ENCODE measurements at regions of chr1 and their contacts with region 1.

Region 1: DNA sequence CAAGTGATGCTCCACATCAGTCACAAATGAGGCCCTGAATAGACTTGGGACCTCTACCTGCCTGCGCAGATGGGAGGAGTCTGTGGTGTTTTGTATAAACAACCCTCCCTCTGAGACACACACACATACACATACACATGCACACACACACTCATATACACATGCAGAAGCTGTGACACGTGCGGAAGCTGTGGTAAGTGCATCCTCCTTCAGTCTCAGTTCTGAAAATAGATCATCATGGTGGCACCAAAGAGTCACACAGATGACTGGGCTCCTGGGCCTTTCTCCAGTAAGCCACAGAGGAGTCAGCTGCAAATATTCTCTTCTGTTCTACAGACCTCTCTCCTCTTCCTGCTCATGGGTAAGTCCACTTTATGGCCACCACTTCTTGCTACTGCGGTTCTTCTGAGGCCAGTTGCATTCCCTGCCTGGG is at the start of gene LY9:
- DNase-seq: peak; percentile 94
- H3K4me3 ChIP-seq: peak within 1 kb of the TSS; percentile 76
- H3K27ac ChIP-seq: peak within 1 kb of the TSS; percentile 82
- H3K4me1 ChIP-seq: peaks cover 51% of the 10 kb centered on the region
- CTCF ChIP-seq: no peak
- total RNA-seq, gene LY9: 23.7 and 28.4 TPM in 2 replicates

Region 2: DNA sequence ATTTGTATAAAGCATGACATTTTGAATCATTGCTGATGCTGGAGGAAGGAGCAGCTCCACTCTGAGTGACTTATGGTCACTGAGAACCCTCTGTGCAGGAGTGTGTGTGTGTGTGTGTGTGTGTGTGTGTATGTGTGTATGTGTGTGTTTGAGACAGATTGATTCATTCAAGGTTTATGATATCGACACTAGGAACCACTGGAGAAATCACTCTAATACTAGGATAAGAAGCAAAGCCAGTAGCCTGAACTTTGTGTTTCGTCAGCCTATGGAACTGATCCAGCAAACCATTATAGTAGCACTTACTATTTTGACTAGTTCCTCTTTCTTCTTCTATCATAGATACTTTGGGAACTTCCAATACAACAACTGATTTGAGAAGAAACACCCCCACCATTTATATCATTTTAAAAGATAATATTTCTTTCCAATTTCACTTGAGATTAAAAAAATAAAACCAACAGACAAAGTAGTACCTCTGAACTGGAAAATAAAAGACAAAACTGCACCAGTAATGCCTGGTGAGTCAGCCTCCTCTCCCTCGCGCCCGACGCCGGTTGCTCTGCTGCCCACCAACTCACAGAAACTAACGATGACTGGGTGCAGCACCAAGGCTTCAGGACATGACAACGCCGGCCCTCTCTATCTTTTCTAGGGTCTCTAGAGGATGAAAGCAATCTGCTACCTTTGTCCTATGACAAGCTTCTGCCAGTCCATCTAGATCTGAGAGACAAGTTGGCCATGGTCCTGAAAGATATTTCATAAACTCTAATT is 170.1 kb before region 1 on chr1:
- CTCF ChIA-PET with region 1: no interaction called
- POLR2A ChIA-PET with region 1: no interaction called
- intact Hi-C with region 1: loop called (anchors 5 kb)
- DNase-seq: no peak
- H3K4me3 ChIP-seq: peak overlapping the region; percentile 43
- H3K27ac ChIP-seq: peak overlapping the region; percentile 87
- H3K4me1 ChIP-seq: peaks cover 96% of the 10 kb centered on the region
- CTCF ChIP-seq: no peak

Region 3: GRCh38 chr1:160711602-160712311 is 84.2 kb before region 1 on chr1 and contains the start of gene CD48:
- CTCF ChIA-PET with region 1: no interaction called
- POLR2A ChIA-PET with region 1: interaction called, 18 read pairs
- intact Hi-C with region 1: no loop called
- DNase-seq: peak; percentile 88
- H3K4me3 ChIP-seq: peak within 1 kb of the TSS; percentile 77
- H3K27ac ChIP-seq: peak within 1 kb of the TSS; percentile 98
- H3K4me1 ChIP-seq: peaks cover 61% of the 10 kb centered on the region
- CTCF ChIP-seq: no peak
- total RNA-seq, gene CD48: 131 and 150 TPM in 2 replicates

Region 4: GRCh38 chr1:160806109-160806665 is 10.2 kb after region 1 on chr1:
- CTCF ChIA-PET with region 1: no interaction called
- POLR2A ChIA-PET with region 1: interaction called, 14 read pairs
- intact Hi-C with region 1: no loop called
- DNase-seq: no peak
- H3K4me3 ChIP-seq: no peak overlapping the region
- H3K27ac ChIP-seq: no peak overlapping the region
- H3K4me1 ChIP-seq: peaks cover 4% of the 10 kb centered on the region
- CTCF ChIP-seq: peak; percentile 69

Region 5: DNA sequence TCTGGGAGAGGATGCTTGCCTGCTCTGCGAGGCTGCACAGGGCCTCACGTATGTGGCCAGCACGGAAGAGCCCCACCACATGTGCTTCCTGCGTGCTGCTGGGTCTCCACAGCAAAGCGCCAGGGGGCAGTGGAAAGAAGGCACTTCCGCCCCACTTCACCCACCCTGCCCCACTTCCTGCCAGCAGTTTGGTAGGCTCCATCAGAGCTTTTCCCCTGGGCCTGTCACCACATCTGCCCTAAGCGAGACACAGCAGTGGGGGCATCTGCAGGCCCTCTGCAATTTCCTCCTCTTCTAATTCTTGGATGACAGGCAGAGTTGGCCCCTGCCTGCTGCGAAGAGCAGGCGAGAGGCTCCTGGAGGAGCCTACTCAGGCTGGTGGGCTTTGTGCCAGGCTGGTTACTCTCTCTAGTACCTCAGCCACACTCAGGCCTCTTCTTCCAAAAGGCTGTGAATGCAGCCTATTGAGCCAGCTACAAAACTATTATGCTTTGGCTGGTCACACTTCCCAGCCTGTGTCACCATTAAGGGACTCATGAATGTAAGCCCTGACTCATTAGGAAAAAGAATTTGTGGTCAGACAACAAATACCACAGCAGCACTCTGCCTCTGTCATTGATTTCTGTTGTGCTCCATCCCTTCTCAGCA is 41.7 kb after region 1 on chr1:
- CTCF ChIA-PET with region 1: interaction called, 3 read pairs
- POLR2A ChIA-PET with region 1: interaction called, 10 read pairs
- intact Hi-C with region 1: no loop called
- DNase-seq: peak; percentile 97
- H3K4me3 ChIP-seq: peak overlapping the region; percentile 10
- H3K27ac ChIP-seq: peak overlapping the region; percentile 63
- H3K4me1 ChIP-seq: peaks cover 39% of the 10 kb centered on the region
- CTCF ChIP-seq: peak; percentile 69